Activated T-helper 2 cell treated with anti-CD3 and anti-CD28 coated beads, Interferon-gamma antibody, Interleukin-2, Interleukin-4, amounts not matched to agents 10 μg/mL and 5 μg/mL and 100 μg/mL, durations not matched to agents 14 hours and 24 hours and 36 hours (primary cell): ENCODE measurements at regions of chr6 and their contacts with region 1.

Region 1: GRCh38 chr6:3118353-3119039 is at the start of gene BPHL:
- DNase-seq: peak; percentile 98
- H3K4me3 Mint-ChIP-seq: peak within 1 kb of the TSS; percentile 80
- H3K27ac Mint-ChIP-seq: peak within 1 kb of the TSS; percentile 81
- H3K4me1 Mint-ChIP-seq: peaks cover 16% of the 10 kb centered on the region
- H3K27me3 Mint-ChIP-seq: no peaks in the 10 kb centered on the region
- total RNA-seq, gene BPHL: 12.1 and 15.8 TPM in 2 replicates

Region 2: GRCh38 chr6:2460216-2460745 is 658.2 kb before region 1 on chr6:
- intact Hi-C with region 1: no loop called
- DNase-seq: no peak
- H3K4me3 Mint-ChIP-seq: no peak overlapping the region
- H3K27ac Mint-ChIP-seq: no peak overlapping the region
- H3K4me1 Mint-ChIP-seq: no peaks in the 10 kb centered on the region
- H3K27me3 Mint-ChIP-seq: peaks cover 6% of the 10 kb centered on the region

Region 3: DNA sequence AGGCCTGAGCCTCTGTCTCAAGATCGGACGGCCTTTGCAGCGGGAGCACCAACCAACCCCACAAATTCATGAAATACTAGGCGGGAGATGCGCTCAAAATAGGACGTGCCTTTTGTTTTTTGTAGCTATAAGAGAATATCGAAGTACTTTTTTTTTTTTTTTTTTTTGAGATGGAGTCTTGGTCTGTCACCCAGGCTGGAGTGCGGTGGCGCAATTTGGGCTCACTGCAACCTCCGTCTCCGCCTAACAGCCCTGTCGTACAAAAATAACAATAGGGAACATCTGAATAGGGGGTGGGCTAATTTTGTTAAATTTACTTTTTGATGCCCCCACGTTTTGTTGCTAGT is 44.7 kb after region 1 on chr6:
- intact Hi-C with region 1: no loop called
- DNase-seq: no peak
- H3K4me3 Mint-ChIP-seq: peak overlapping the region; percentile 83
- H3K27ac Mint-ChIP-seq: no peak overlapping the region
- H3K4me1 Mint-ChIP-seq: peaks cover 18% of the 10 kb centered on the region
- H3K27me3 Mint-ChIP-seq: peaks cover 58% of the 10 kb centered on the region

Region 4: DNA sequence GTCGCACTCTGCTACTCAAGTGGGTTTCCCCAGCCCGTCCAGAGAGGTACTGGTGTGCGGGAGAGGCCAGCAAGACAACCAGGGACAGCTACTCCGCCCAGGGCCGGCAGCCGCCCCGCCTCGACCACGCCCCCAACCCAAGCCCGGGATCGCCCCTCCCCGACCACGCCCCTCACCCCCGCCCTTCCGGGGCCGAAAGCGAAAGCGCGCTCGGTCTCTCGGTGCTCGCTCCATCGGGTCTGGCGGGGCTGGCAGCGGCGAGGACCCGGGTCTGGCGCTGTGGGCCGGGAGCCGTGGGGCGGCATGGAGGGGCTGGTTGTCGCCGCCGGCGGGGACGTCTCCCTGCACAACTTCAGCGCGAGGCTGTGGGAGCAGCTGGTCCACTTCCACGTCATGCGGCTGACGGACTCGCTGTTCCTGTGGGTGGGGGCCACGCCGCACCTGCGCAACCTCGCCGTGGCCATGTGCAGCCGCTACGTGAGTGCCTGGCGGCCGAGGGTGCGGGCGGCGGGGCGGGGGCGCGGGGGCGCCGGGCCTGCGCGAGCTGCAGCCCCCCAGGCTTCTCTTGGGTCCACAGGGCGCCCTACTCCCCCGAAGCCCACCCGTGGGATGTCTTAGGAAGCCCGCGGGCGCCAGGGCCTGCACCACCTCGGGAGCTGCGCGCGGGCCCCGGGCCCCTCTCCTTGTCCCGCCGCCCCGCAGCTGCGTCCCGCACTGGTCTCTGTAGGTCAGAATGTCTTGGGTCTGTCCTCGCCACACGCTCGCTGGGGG is 140.4 kb after region 1 on chr6 and contains the start of gene PSMG4:
- intact Hi-C with region 1: loop called (anchors 2 kb)
- DNase-seq: peak; percentile 90
- H3K4me3 Mint-ChIP-seq: peak within 1 kb of the TSS; percentile 98
- H3K27ac Mint-ChIP-seq: peak within 1 kb of the TSS; percentile 88
- H3K4me1 Mint-ChIP-seq: peaks cover 25% of the 10 kb centered on the region
- H3K27me3 Mint-ChIP-seq: peaks cover 17% of the 10 kb centered on the region
- total RNA-seq, gene PSMG4: 26.4 and 30.9 TPM in 2 replicates